ENCODE measurements at regions of chr12 and their contacts with region 1.

Region 1: DNA sequence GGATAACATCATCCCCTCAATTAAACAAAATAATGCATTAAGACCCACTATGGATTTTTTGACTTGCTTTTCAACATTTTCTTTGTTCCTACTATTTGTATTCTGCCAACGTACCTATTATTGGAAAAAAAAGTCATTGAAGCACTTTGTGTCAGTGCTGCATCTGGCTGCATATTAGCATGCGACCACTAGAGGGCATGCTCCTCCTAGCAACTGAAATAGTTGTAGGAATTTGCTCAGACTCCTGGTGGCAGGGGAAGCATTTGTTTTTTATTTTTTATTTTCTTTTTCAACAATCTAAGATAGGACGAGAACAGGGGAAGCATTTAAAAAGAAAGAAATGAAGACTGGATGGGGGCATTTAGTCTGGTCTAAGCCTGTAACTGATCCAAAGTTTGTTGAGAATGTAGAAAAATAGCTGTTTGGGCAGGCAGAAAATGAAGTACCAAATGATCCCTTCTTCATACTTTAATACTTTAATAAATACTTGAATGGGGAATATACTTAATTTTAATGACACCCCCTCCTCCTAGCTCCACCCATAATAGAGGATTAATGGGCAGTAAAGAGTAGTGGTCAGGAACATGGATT is 14.5 kb upstream of the CLEC4A start:
- DNase-seq: peak; percentile 64 to 87 (median 72)
- ATAC-seq: peak; percentile 99
- H3K4me3 ChIP-seq: no peak overlapping the region
- H3K4me3 Mint-ChIP-seq: no peak overlapping the region
- H3K27ac ChIP-seq: no peak overlapping the region
- H3K27ac Mint-ChIP-seq: no peak overlapping the region
- H3K4me1 ChIP-seq: no peaks in the 10 kb centered on the region
- H3K4me1 Mint-ChIP-seq: peaks cover 5% of the 10 kb centered on the region
- H3K27me3 ChIP-seq: no peaks in the 10 kb centered on the region
- H3K27me3 Mint-ChIP-seq: no peaks in the 10 kb centered on the region
- CTCF ChIP-seq: peak; percentile 100

Region 2: DNA sequence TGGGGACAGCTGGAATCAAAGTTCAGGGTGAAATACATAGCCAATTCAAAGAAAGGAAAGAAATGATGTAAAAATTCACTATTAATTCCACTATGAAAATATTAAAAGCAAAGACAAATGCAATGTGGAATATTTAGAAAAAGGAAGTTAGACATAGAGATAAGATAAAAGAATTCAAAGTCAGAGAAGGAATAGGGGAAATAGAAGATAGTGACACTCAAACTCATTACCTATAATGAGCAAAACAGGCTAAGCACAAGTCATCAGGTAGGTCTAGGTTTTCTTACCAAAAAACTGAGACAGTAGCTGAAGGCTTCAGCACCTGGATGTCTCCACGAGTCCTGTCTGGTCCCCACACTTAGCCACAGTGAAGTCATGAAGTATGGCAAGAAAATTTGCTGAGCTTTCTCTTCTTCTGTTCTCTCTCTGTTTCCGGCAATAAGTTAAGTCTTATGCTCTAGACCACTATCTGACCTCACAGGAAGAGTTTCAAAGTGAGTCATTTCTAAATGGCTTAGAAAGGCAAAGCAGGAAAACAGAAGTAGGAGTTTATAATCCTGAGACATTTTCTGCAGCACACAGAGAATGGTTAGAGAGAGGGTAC is 42.8 kb before region 1 on chr12 and contains the start of gene C3AR1:
- CTCF ChIA-PET with region 1: no interaction called
- POLR2A ChIA-PET with region 1: no interaction called
- intact Hi-C with region 1: no loop called
- DNase-seq: peak in 13 of 14 experiments; percentile 16 to 88 (median 47)
- ATAC-seq: peak; percentile 97
- H3K4me3 ChIP-seq: peak within 1 kb of the TSS; percentile 19
- H3K4me3 Mint-ChIP-seq: peak within 1 kb of the TSS; percentile 47
- H3K27ac ChIP-seq: peak within 1 kb of the TSS; percentile 47 to 48
- H3K27ac Mint-ChIP-seq: peak within 1 kb of the TSS; percentile 91
- H3K4me1 ChIP-seq: peaks cover 23% of the 10 kb centered on the region
- H3K4me1 Mint-ChIP-seq: peaks cover 32% of the 10 kb centered on the region
- H3K27me3 ChIP-seq: no peaks in the 10 kb centered on the region
- H3K27me3 Mint-ChIP-seq: no peaks in the 10 kb centered on the region
- CTCF ChIP-seq: no peak
- total RNA-seq, gene C3AR1: 1.4 TPM

Region 3: DNA sequence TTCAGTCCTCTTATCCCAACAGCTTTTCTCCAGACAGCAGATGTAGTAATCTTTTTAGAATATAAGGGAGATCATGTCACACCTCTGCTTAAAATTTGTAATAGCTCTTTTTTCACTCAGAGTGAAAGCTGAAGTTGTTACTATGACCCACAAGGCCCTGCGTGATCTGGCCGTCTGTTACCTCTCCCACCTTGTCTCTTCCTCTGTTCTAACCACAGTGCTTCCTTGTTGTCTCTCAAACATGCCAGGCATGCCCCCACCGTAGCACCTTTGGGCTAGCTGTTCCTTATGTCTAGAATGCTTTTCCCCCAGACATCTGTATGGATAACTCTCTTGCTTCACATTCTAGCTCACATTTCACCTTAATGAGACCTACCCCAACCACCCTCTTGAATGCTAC is 20.3 kb before region 1 on chr12:
- CTCF ChIA-PET with region 1: interaction called, 5 read pairs
- POLR2A ChIA-PET with region 1: no interaction called
- intact Hi-C with region 1: loop called in 1 of 2 experiments (anchors 2 kb)
- DNase-seq: peak in 13 of 14 experiments; percentile 10 to 86 (median 39)
- ATAC-seq: peak; percentile 95
- H3K4me3 ChIP-seq: peak overlapping the region; percentile 3
- H3K4me3 Mint-ChIP-seq: peak overlapping the region; percentile 61
- H3K27ac ChIP-seq: peak overlapping the region; percentile 66 to 78
- H3K27ac Mint-ChIP-seq: peak overlapping the region; percentile 79
- H3K4me1 ChIP-seq: peaks cover 44% of the 10 kb centered on the region
- H3K4me1 Mint-ChIP-seq: peaks cover 39% of the 10 kb centered on the region
- H3K27me3 ChIP-seq: no peaks in the 10 kb centered on the region
- H3K27me3 Mint-ChIP-seq: no peaks in the 10 kb centered on the region
- CTCF ChIP-seq: no peak

Region 4: DNA sequence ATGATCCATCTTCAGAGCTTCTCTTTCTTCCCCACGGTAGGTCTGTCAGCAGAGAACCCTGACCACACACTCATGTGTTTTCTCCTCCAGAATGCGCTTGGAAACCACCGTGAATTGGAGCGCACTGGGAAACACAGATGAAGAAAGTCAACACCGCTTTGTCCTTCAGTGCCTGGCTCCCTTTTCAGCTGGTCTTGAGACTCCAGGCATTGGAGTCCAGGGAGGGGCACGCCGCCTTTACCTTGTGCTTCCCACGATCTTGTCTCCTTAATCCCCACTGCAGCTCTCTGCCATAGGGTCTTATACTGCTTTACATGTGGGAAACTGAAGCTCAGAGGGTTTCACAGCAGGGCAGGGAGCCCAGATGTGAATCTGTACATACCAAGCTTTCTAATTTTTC is 117.5 kb after region 1 on chr12:
- CTCF ChIA-PET with region 1: interaction called, 12 read pairs
- POLR2A ChIA-PET with region 1: no interaction called
- intact Hi-C with region 1: loop called in 1 of 2 experiments (anchors 1 kb)
- DNase-seq: no peak
- ATAC-seq: no peak
- H3K4me3 ChIP-seq: no peak overlapping the region
- H3K4me3 Mint-ChIP-seq: no peak overlapping the region
- H3K27ac ChIP-seq: no peak overlapping the region
- H3K27ac Mint-ChIP-seq: no peak overlapping the region
- H3K4me1 ChIP-seq: peaks cover 6% of the 10 kb centered on the region
- H3K4me1 Mint-ChIP-seq: no peaks in the 10 kb centered on the region
- H3K27me3 ChIP-seq: no peaks in the 10 kb centered on the region
- H3K27me3 Mint-ChIP-seq: no peaks in the 10 kb centered on the region
- CTCF ChIP-seq: no peak

Measured in CD4-positive, alpha-beta T cell (primary cell).